ENCODE measurements at regions of chr6 and their contacts with region 1.

Region 1: DNA sequence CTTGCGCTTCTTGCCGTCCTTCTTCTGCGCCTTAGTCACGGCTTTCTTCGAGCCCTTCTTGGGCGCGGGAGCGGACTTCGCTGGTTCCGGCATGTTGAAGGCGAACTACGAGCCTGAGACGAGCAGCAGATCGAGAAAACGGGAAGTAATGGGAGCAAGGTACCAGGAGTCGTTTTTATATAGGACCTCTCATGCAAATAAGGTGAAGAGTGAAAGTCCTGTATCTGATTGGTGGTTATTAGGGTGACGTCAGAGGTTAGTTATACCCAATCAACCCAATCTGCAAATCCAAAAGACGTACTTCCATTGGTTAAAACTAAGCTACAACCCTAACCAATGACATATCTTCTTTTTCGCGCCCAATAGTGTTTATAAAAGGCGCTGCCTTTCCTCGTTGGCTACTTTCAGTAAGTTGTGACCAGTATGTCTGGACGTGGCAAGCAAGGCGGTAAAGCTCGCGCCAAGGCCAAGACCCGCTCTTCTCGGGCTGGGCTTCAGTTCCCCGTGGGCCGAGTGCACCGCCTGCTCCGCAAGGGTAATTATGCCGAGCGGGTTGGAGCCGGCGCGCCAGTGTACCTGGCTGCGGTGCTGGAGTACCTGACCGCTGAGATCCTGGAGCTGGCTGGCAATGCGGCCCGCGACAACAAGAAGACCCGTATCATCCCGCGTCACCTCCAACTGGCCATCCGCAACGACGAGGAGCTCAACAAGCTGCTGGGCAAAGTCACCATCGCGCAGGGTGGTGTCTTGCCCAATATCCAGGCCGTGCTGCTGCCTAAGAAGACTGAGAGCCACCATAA is 100.6 kb upstream of the PRSS16 start:
- DNase-seq: peak; percentile 98
- ATAC-seq: peak; percentile 85
- H3K4me3 ChIP-seq: peak overlapping the region; percentile 72 to 100 (median 88)
- H3K4me3 Mint-ChIP-seq: no peak overlapping the region
- H3K27ac ChIP-seq: peak overlapping the region; percentile 76 to 92
- H3K27ac Mint-ChIP-seq: no peak overlapping the region
- H3K4me1 ChIP-seq: peaks cover 20 to 26% of the 10 kb centered on the region in 2 donors
- H3K4me1 Mint-ChIP-seq: peaks cover 17% of the 10 kb centered on the region
- H3K27me3 ChIP-seq: no peaks in the 10 kb centered on the region
- H3K27me3 Mint-ChIP-seq: no peaks in the 10 kb centered on the region
- CTCF ChIP-seq: no peak

Region 2: DNA sequence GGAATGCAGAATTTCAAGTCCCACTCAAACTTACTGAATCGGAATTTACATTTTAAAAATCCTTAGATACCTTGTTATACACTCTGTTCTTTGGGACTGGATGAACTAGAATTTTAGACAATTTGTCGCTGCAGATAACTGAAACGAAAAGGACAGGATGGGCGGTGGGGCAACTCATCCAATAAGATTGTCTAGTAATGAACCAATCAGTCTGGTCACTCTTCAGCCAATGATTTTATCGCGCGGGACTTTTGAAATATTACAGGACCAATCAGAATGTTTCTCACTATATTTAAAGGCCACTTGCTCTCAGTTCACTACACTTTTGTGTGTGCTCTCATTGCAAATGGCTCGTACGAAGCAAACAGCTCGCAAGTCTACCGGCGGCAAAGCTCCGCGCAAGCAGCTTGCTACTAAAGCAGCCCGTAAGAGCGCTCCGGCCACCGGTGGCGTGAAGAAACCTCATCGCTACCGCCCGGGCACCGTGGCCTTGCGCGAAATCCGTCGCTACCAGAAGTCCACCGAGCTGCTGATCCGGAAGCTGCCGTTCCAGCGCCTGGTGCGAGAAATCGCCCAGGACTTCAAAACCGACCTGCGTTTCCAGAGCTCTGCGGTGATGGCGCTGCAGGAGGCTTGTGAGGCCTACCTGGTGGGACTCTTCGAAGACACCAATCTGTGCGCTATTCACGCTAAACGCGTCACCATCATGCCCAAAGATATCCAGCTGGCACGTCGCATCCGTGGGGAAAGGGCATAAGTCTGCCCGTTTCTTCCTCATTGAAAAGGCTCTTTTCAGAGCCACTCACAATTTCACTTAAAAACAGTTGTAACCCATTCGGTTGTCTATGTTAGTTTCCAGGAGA is 1101.6 kb before region 1 on chr6:
- CTCF ChIA-PET with region 1: no interaction called
- POLR2A ChIA-PET with region 1: interaction called, 12 read pairs
- intact Hi-C with region 1: no loop called
- DNase-seq: peak; percentile 90
- ATAC-seq: peak; percentile 58
- H3K4me3 ChIP-seq: peak overlapping the region; percentile 56 to 98 (median 69)
- H3K4me3 Mint-ChIP-seq: peak overlapping the region; percentile 87
- H3K27ac ChIP-seq: peak overlapping the region; percentile 85 to 89
- H3K27ac Mint-ChIP-seq: peak overlapping the region; percentile 99
- H3K4me1 ChIP-seq: peaks cover 14 to 29% of the 10 kb centered on the region in 2 donors
- H3K4me1 Mint-ChIP-seq: peaks cover 17% of the 10 kb centered on the region
- H3K27me3 ChIP-seq: no peaks in the 10 kb centered on the region
- H3K27me3 Mint-ChIP-seq: no peaks in the 10 kb centered on the region
- CTCF ChIP-seq: no peak

Region 3: GRCh38 chr6:26183581-26184366 is 963.1 kb before region 1 on chr6:
- CTCF ChIA-PET with region 1: no interaction called
- POLR2A ChIA-PET with region 1: interaction called, 18 read pairs
- intact Hi-C with region 1: no loop called
- DNase-seq: peak; percentile 84
- ATAC-seq: peak; percentile 89
- H3K4me3 ChIP-seq: peak overlapping the region; percentile 51 to 73 (median 71)
- H3K4me3 Mint-ChIP-seq: peak overlapping the region; percentile 91
- H3K27ac ChIP-seq: peak overlapping the region in 1 of 2 donors; percentile 61
- H3K27ac Mint-ChIP-seq: peak overlapping the region; percentile 85
- H3K4me1 ChIP-seq: peaks cover 13 to 22% of the 10 kb centered on the region in 2 donors
- H3K4me1 Mint-ChIP-seq: peaks cover 25% of the 10 kb centered on the region
- H3K27me3 ChIP-seq: no peaks in the 10 kb centered on the region
- H3K27me3 Mint-ChIP-seq: no peaks in the 10 kb centered on the region
- CTCF ChIP-seq: no peak

Region 4: GRCh38 chr6:27126815-27127537 is 19.9 kb before region 1 on chr6:
- CTCF ChIA-PET with region 1: interaction called, 31 read pairs
- POLR2A ChIA-PET with region 1: interaction called, 266 read pairs
- intact Hi-C with region 1: no loop called
- DNase-seq: peak; percentile 93
- ATAC-seq: peak; percentile 76
- H3K4me3 ChIP-seq: peak overlapping the region; percentile 5 to 56 (median 40)
- H3K4me3 Mint-ChIP-seq: peak overlapping the region; percentile 87
- H3K27ac ChIP-seq: peak overlapping the region in 1 of 2 donors; percentile 56
- H3K27ac Mint-ChIP-seq: peak overlapping the region; percentile 85
- H3K4me1 ChIP-seq: peaks cover 13 to 18% of the 10 kb centered on the region in 2 donors
- H3K4me1 Mint-ChIP-seq: peaks cover 20% of the 10 kb centered on the region
- H3K27me3 ChIP-seq: no peaks in the 10 kb centered on the region
- H3K27me3 Mint-ChIP-seq: no peaks in the 10 kb centered on the region
- CTCF ChIP-seq: peak; percentile 92

Region 5: GRCh38 chr6:27400877-27401642 is 254.2 kb after region 1 on chr6:
- CTCF ChIA-PET with region 1: no interaction called
- POLR2A ChIA-PET with region 1: no interaction called
- intact Hi-C with region 1: no loop called
- DNase-seq: no peak
- ATAC-seq: no peak
- H3K4me3 ChIP-seq: no peak overlapping the region
- H3K4me3 Mint-ChIP-seq: no peak overlapping the region
- H3K27ac ChIP-seq: no peak overlapping the region
- H3K27ac Mint-ChIP-seq: no peak overlapping the region
- H3K4me1 ChIP-seq: no peaks in the 10 kb centered on the region
- H3K4me1 Mint-ChIP-seq: no peaks in the 10 kb centered on the region
- H3K27me3 ChIP-seq: no peaks in the 10 kb centered on the region
- H3K27me3 Mint-ChIP-seq: no peaks in the 10 kb centered on the region
- CTCF ChIP-seq: no peak

Region 6: DNA sequence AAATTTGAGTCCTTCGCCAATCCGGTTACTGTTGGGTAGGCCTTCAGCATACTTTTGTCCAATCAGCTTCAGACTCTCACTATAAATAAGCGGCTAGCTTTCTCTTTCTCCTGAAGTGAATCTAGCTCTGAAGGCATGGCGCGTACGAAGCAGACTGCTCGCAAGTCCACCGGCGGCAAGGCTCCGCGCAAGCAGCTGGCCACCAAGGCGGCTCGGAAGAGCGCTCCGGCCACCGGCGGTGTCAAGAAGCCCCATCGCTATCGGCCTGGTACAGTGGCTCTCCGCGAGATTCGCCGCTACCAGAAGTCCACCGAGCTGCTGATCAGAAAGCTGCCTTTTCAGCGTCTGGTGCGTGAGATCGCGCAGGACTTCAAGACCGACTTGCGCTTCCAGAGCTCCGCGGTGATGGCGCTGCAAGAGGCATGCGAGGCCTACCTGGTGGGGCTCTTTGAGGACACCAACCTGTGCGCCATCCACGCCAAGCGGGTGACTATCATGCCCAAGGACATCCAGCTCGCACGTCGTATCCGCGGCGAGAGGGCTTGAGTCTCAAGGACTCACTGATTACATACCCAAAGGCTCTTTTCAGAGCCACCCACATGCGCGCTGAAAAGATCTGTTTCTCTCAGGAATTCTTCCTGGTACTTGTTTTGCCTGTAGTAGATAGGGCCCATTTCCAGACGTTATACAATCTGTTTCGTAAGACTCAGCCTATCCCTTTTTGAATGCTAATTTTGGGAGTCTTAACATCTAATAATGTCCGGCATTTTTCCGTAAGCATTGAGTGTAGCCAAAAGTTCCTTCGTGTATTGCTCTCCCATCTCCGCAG is 663.2 kb after region 1 on chr6:
- CTCF ChIA-PET with region 1: interaction called, 4 read pairs
- POLR2A ChIA-PET with region 1: interaction called, 40 read pairs
- intact Hi-C with region 1: loop called (anchors 1 kb)
- DNase-seq: peak; percentile 96
- ATAC-seq: peak; percentile 50
- H3K4me3 ChIP-seq: peak overlapping the region; percentile 66 to 94 (median 84)
- H3K4me3 Mint-ChIP-seq: peak overlapping the region; percentile 98
- H3K27ac ChIP-seq: peak overlapping the region; percentile 82
- H3K27ac Mint-ChIP-seq: peak overlapping the region; percentile 99
- H3K4me1 ChIP-seq: peaks cover 37 to 47% of the 10 kb centered on the region in 2 donors
- H3K4me1 Mint-ChIP-seq: peaks cover 58% of the 10 kb centered on the region
- H3K27me3 ChIP-seq: no peaks in the 10 kb centered on the region
- H3K27me3 Mint-ChIP-seq: no peaks in the 10 kb centered on the region
- CTCF ChIP-seq: no peak

Region 7: GRCh38 chr6:27847706-27848105 is 700.8 kb after region 1 on chr6:
- CTCF ChIA-PET with region 1: no interaction called
- POLR2A ChIA-PET with region 1: interaction called, 12 read pairs
- intact Hi-C with region 1: no loop called
- DNase-seq: no peak
- ATAC-seq: no peak
- H3K4me3 ChIP-seq: no peak overlapping the region
- H3K4me3 Mint-ChIP-seq: no peak overlapping the region
- H3K27ac ChIP-seq: no peak overlapping the region
- H3K27ac Mint-ChIP-seq: no peak overlapping the region
- H3K4me1 ChIP-seq: no peaks in the 10 kb centered on the region
- H3K4me1 Mint-ChIP-seq: no peaks in the 10 kb centered on the region
- H3K27me3 ChIP-seq: no peaks in the 10 kb centered on the region
- H3K27me3 Mint-ChIP-seq: no peaks in the 10 kb centered on the region
- CTCF ChIP-seq: no peak

Region 8: GRCh38 chr6:28863604-28864320 is 1716.9 kb after region 1 on chr6:
- CTCF ChIA-PET with region 1: no interaction called
- POLR2A ChIA-PET with region 1: interaction called, 11 read pairs
- intact Hi-C with region 1: no loop called
- DNase-seq: peak; percentile 88
- ATAC-seq: peak; percentile 26
- H3K4me3 ChIP-seq: peak overlapping the region; percentile 54 to 78 (median 75)
- H3K4me3 Mint-ChIP-seq: peak overlapping the region; percentile 83
- H3K27ac ChIP-seq: no peak overlapping the region
- H3K27ac Mint-ChIP-seq: peak overlapping the region; percentile 94
- H3K4me1 ChIP-seq: peaks cover 14 to 24% of the 10 kb centered on the region in 2 donors
- H3K4me1 Mint-ChIP-seq: peaks cover 28% of the 10 kb centered on the region
- H3K27me3 ChIP-seq: peaks cover 0 to 4% (median 0%) of the 10 kb centered on the region in 4 experiments
- H3K27me3 Mint-ChIP-seq: peaks cover 10% of the 10 kb centered on the region
- CTCF ChIP-seq: no peak

Measured in B cell (primary cell).